Left colon (tissue), 2 donors: ENCODE measurements at regions of chr13 and their contacts with region 1.

Region 1: DNA sequence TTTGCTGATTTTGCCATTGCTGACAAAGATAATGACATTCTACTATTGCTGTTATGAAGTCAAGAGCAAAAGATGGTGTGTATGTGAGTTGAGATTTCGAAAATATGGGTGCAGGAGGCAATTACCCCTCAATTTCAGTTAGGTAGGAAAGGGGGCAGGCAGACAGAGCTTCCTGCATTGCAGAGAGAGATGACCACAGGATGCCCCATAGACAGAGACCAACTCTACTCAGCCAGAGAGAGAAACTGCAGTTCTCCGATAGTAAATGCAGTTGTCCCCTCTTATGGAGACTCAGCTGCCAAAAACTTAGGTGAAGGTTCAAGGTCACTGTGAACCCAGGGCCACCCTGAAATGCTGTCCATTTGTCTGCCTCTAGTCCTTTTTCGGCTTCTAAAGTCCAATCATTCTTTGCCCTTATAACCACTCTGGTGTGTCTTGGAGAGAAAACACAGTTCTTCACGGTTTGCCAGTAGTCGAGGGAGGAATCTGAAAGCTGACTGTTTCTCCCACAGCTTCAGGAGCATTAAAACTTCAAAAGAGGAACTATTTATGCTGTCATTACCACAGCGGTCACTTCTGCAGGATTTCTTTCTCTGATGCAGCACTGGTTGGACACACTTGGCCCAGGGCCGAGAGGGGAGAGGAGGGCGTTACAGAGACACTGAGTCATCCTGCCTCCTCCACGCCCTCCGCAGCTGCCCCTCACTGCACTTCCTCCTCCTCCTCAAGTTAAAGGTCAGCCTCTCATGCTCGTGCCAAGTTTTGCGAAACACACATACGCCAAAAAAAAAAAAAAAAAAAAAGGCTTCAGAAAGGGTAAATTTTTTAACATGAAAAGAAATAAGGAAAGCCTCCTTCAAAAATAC is 264.3 kb downstream of the FOXO1 start:
- DNase-seq: peak; percentile 95 to 98
- ATAC-seq: peak; percentile 96

Region 2: DNA sequence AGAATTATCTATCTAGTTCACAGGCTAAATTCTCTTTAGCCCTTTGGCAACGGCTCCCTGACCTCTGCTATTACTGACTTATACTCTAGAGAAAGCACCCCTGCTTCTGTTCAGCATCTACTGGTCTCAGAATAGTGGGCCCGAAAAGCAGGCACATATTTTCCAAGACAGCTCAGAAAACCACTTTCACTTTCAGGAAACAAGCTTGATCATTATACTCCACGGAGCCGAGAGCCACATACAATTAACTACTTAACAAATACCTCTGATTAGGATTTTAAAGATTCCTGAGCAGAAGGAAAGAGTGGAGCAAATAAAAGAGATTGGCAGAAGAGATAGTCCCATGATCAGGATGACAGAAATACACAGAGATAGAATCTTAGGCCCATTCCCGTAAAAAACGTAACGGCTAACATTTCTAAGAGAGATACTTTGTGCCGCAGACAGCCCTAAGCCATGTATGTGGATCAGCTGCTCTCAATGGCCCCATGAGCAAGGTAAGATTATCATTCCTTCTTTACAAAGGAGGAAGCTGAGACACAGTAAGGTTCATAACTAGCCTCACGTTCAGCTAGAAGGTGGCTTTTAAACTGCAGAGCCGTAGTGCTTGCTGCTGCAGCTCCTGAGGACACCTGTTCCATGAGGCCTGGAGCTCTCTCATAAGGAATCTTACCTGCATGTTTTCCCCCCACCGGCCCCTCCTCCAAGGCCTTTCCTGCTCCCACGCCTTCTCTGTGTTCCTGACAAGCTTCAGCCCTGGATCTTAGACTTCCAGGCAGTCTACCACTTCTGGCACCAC is 37.1 kb after region 1 on chr13:
- intact Hi-C with region 1: loop called in 1 of 2 experiments (anchors 5 kb)
- DNase-seq: no peak
- ATAC-seq: no peak

Region 3: DNA sequence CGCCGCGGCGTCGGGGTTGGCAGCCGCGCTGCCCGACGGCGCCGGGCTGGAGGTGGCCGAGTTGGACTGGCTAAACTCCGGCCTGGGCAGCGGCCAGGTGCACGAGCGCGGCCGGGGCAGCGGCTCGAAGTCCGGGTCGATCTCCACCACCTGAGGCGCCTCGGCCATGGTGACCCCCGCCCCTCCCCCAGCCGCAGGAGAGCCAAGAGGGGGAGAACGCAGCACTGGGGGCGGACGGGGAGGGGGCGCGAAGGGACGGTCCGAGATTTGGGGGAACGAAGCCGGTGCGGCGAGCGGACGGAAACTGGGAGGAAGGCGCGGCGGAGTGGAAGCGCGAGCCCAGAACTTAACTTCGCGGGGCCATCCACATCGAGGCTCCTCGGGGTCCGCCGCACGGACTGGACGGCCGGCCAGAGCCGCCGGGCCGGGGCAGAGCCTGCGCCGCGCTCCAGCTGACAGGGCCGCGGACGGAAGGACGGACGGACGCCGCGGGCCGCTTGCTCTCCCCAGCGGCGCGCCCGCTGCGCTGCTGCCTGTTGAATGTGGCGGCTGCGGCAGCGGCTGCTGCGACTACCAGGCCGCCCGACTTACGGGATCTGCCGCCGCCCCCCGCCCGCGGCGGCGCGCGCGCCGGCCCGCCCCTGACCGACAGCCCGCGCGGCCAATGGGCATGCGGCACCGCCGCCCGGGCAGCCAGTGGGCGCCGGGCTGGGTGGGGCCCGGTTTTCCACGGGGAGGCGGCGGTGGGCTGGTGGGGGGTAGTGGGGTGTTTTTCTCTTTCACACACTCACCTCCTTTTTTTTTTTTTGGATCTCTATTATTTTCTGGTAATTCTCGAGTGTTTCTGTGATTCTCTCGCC is 264.1 kb after region 1 on chr13 and contains the start of gene FOXO1:
- intact Hi-C with region 1: loop called in 1 of 2 experiments (anchors 10 kb)
- DNase-seq: peak; percentile 86 to 88
- ATAC-seq: peak; percentile 69
- total RNA-seq, gene FOXO1: 31.1 to 33.9 TPM